ENCODE measurements at regions of chr19 and their contacts with region 1.

Region 1: GRCh38 chr19:2315818-2316353 is 7.9 kb upstream of the LINGO3 start:
- DNase-seq: no peak
- H3K4me3 ChIP-seq: no peak overlapping the region
- CTCF ChIP-seq: peak; percentile 84

Region 2: GRCh38 chr19:1929021-1929742 is 386.7 kb before region 1 on chr19:
- CTCF ChIA-PET with region 1: interaction called, 21 read pairs
- POLR2A ChIA-PET with region 1: no interaction called
- DNase-seq: no peak
- H3K4me3 ChIP-seq: peak overlapping the region; percentile 49
- CTCF ChIP-seq: peak; percentile 96

Region 3: DNA sequence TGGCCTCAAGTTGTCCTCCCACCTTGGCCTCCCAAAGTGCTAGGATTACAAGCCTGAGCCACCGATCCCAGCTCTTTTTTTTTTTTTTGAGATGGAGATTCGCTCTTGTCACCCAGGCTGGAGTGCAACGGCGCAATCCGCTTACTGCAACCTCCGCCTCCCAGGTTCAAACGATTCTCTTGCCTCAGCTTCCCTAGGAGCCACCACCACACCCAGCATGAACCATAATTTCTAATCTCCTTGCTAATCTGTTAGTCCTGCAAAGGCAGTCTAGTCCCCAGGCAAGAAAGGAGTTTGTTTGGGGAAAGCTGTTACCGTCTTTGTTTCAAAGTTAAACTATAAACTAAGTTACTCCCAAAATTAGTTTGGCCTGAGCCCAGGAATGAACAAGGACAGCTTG is 157.4 kb before region 1 on chr19:
- CTCF ChIA-PET with region 1: interaction called, 71 read pairs
- POLR2A ChIA-PET with region 1: no interaction called
- DNase-seq: no peak
- H3K4me3 ChIP-seq: no peak overlapping the region
- CTCF ChIP-seq: no peak

Region 4: GRCh38 chr19:2236314-2237050 is 79.4 kb before region 1 on chr19 and contains the starts of genes PLEKHJ1 and SF3A2:
- CTCF ChIA-PET with region 1: interaction called, 22 read pairs
- POLR2A ChIA-PET with region 1: no interaction called
- DNase-seq: peak; percentile 70
- H3K4me3 ChIP-seq: peak within 1 kb of the TSS; percentile 83
- CTCF ChIP-seq: peak; percentile 99

Region 5: DNA sequence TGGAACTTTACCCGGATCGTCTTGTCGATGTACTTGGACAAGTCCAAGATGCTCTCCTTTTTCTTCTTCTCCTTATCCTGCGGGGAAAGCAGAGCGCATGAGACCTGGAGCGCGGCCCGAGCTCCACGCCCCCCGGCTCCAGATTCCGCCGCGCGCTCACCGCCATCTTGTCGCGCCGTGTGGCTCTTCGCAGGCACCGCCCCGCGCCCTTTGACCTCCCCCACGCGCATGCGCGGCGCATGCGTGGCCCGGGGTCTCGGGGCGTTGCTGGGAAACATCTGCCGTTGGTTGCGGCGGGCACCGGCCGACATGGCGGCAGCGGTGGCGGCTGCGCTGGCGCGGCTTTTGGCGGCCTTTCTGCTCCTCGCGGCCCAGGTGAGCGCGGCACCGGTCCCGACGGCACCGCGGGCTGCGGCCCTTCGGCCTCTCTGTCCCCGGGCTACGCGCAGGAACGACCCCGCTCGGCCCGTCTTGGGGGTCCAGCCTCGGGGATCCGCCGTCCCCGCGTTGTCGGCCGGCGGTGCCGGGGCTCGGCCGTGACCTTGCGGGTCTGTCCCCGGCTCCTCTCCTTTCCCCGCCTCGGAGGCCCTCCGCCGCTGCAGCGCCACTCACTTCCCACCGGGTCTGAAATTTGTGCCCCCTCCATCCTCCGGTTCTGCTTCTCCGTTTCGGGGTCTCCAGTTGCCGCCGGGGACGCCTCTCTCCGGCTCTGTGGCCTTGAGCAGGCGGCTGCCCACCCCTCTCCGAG is 12.7 kb after region 1 on chr19 and contains the starts of genes LSM7 and SPPL2B:
- CTCF ChIA-PET with region 1: interaction called, 13 read pairs
- POLR2A ChIA-PET with region 1: interaction called, 3 read pairs
- DNase-seq: no peak
- H3K4me3 ChIP-seq: peak within 1 kb of the TSS; percentile 92
- CTCF ChIP-seq: no peak

Measured in AG04449 (cell line).